ENCODE measurements at regions of chr2 and their contacts with region 1.

Region 1: DNA sequence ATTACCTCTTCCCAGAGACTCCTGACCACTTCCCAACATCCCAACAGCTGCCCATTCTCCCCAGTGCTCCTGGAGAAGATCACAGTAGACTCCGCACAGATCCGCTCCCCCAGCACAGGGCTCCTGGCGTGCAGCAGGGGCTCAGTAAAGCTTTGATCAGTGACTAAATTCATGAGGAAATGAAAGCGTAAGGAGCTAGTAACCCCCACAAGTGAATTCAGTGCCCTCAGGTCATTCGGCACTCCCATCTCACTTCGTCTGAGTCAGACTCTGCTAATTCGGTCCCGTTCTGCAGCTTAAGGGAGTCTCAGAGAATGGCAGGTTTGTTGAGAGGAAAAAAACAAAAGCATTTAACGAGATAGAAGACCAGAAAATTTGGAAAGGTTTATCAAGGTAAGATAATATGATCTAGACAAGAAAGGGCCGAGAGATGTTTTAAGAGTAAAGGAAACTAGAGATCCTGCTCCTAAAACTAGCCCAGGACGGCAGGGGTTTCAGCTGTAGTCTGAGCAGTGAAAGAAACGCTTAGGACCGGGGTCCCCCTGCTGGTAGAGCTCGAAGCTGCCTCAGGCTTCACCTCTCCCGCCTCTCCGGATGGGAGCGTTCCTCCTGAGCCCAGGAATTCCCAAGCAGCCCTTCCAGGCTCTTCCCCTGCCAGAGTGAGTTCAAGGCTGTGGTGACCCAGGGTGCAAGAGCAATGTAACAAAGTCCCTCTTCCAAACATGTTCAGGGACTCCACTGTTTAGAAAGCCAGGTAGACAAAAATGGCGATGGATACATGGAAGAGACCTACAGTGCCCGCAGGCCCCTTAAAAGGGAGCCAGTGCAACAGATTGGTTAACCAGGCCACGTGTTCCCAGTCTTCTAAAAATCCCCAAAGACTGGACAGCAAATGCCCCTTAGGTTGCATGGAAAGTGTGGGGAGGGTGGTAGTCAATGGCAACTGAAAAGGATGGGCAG is 127.3 kb downstream of the DNER start:
- DNase-seq: peak; percentile 80 to 95 (median 90)

Region 2: GRCh38 chr2:229342376-229342775 is 244.7 kb before region 1 on chr2:
- intact Hi-C with region 1: loop called (anchors 10 kb)
- DNase-seq: peak in 40 of 42 donors; percentile 22 to 80 (median 49)

Region 3: DNA sequence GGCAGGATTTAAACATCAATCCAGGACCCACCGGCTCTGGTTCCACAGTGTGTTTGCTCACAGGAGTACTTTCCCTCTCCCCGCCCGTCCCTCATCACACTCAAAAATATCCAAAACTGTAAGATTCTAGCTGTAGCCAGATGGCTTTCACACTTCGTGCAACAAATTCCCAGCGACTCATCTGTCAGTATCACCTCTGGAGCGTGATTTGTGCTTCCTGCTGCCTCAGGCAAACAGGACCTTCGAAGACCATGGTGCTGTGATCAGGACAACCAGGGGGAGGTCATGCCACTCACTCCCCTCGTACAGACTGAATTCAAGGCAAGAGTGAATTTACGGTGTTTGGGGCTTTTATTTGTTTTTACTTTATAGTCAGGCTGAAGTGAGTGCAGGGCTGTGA is 161.4 kb before region 1 on chr2:
- intact Hi-C with region 1: loop called (anchors 5 kb)
- DNase-seq: no peak

Region 4: GRCh38 chr2:229714736-229715541 is 127.9 kb after region 1 on chr2:
- intact Hi-C with region 1: loop called (anchors 5 kb)
- DNase-seq: peak; percentile 23 to 88 (median 68)